ENCODE measurements at regions of chr1 and their contacts with region 1.

Region 1: DNA sequence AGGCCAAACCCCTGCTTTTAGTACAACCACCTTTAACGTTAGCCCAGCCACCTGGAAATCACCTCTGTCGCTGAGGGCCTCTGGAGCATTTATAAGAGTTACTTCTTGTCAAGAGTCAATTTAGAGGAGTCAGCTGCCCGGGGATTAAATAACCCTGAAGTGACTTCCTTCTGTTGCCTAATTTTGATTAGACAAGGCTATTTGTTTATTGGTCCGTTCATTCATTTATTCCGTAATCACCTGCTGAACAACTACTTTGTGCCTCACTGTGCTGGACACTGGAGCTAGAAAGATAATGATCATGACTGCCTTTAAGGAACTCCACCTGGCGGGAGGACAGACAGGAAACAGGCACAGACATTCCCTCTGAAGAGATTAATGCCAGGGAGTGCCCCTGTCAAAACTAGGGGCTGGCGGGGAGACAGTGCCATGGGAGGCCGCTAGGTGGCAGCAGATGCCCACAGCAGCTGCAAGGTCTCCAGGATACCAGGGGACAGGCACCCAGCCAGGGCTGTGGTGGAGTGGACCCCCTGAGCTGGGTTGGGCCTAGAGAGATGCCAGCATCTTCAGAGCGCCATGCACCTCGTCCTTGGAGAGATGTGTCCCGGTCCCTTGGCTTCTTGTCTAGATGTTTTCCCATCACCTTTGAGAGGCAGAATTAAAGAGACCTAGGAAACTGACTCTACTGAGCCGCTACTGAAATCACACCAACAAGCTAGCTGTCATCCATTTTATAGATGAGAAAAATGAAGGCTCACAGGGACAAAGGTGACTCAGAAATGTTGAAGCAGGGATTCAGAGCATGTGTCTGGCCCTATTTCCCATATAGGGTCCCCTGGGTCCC is 3.7 kb downstream of the REN start:
- DNase-seq: no peak
- H3K4me3 ChIP-seq: no peak overlapping the region
- H3K27me3 ChIP-seq: no peaks in the 10 kb centered on the region
- CTCF ChIP-seq: peak; percentile 99

Region 2: GRCh38 chr1:204123376-204123775 is 39.1 kb before region 1 on chr1:
- CTCF ChIA-PET with region 1: no interaction called
- POLR2A ChIA-PET with region 1: no interaction called
- DNase-seq: no peak
- H3K4me3 ChIP-seq: no peak overlapping the region
- H3K27me3 ChIP-seq: no peaks in the 10 kb centered on the region
- CTCF ChIP-seq: peak; percentile 28

Region 3: DNA sequence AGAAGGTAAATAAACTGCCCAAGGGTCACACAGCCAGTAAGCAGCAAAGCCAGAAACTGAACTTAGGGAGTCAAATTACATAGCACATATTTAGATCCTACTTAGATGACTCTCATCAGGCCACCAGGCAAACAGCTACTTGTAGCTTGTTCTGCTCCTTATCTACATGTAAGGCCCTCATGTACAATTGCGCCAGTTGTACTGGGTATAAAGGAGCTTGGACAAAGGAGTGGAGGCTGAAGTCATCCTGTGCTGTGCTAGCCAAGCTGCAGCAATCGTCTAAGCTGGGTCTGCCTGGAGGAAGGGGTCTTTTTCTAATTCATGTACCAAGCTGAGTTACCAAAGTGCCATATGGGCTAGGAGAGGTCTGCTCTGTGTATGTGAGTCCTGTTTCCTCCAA is 23.4 kb before region 1 on chr1:
- CTCF ChIA-PET with region 1: interaction called, 10 read pairs
- POLR2A ChIA-PET with region 1: no interaction called
- DNase-seq: no peak
- H3K4me3 ChIP-seq: no peak overlapping the region
- H3K27me3 ChIP-seq: no peaks in the 10 kb centered on the region
- CTCF ChIP-seq: no peak

Region 4: GRCh38 chr1:204177133-204177532 is 14.7 kb after region 1 on chr1:
- CTCF ChIA-PET with region 1: interaction called, 15 read pairs
- POLR2A ChIA-PET with region 1: no interaction called
- DNase-seq: no peak
- H3K4me3 ChIP-seq: no peak overlapping the region
- H3K27me3 ChIP-seq: no peaks in the 10 kb centered on the region
- CTCF ChIP-seq: no peak

Region 5: GRCh38 chr1:204190212-204191211 is 28.1 kb after region 1 on chr1:
- CTCF ChIA-PET with region 1: interaction called, 51 read pairs
- POLR2A ChIA-PET with region 1: interaction called, 6 read pairs
- DNase-seq: peak; percentile 13
- H3K4me3 ChIP-seq: 0 out of 2 replicates have a peak overlapping the region, but pooled peaks have one; percentile 5
- H3K27me3 ChIP-seq: peaks cover 1% of the 10 kb centered on the region; the same call in 1 of the 2 replicates
- CTCF ChIP-seq: no peak

Region 6: GRCh38 chr1:204207136-204207616 is 44.7 kb after region 1 on chr1:
- CTCF ChIA-PET with region 1: interaction called, 240 read pairs
- POLR2A ChIA-PET with region 1: no interaction called
- DNase-seq: no peak
- H3K4me3 ChIP-seq: no peak overlapping the region
- H3K27me3 ChIP-seq: no peaks in the 10 kb centered on the region
- CTCF ChIP-seq: peak; percentile 98

Region 7: GRCh38 chr1:204257954-204258752 is 95.7 kb after region 1 on chr1:
- CTCF ChIA-PET with region 1: interaction called, 38 read pairs
- POLR2A ChIA-PET with region 1: no interaction called
- DNase-seq: no peak
- H3K4me3 ChIP-seq: no peak overlapping the region
- H3K27me3 ChIP-seq: no peaks in the 10 kb centered on the region
- CTCF ChIP-seq: peak; percentile 87

Region 8: GRCh38 chr1:204398217-204399081 is 236.0 kb after region 1 on chr1:
- CTCF ChIA-PET with region 1: interaction called, 20 read pairs
- POLR2A ChIA-PET with region 1: no interaction called
- DNase-seq: no peak
- H3K4me3 ChIP-seq: no peak overlapping the region
- H3K27me3 ChIP-seq: no peaks in the 10 kb centered on the region
- CTCF ChIP-seq: peak; percentile 87

Measured in BJ (cell line).